Activated CD8-positive, alpha-beta T cell treated with anti-CD3 and anti-CD28 coated beads for 36 hours (primary cell): ENCODE measurements at regions of chr4 and their contacts with region 1.

Region 1: DNA sequence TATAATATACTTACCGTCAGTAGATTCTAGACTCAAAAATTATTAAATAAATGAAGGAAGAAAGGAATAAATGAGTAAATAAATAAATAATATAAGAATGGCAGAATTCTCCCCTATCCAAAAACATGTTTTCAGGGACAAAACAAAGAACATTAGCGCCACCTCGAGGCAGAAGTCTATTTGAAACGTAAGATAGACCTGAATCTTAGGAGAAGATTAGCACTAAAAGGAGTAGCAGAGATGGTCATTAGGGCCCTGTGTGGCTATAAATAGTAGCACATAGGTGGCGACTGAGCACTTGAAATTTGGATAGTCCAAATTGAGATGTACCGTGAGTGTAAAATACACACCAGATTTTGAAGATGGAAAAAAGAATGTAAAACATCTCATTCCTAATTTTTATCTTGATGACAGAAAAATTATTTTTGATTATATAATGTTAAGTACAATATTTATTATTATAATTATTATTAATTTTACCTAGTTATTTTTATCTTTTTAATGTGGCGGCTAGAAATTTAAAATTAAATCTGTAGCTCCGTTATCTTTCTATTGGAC is 24.3 kb upstream of the SRD5A3 start:
- DNase-seq: peak; percentile 88
- ATAC-seq: peak; percentile 55
- H3K4me3 Mint-ChIP-seq: no peak overlapping the region
- H3K27ac Mint-ChIP-seq: no peak overlapping the region
- H3K4me1 Mint-ChIP-seq: peaks cover 30% of the 10 kb centered on the region
- H3K27me3 Mint-ChIP-seq: peaks cover 3% of the 10 kb centered on the region
- CTCF ChIP-seq: peak; percentile 81

Region 2: GRCh38 chr4:55078987-55079386 is 242.8 kb before region 1 on chr4:
- CTCF ChIA-PET with region 1: no interaction called
- POLR2A ChIA-PET with region 1: no interaction called
- intact Hi-C with region 1: loop called (anchors 5 kb)
- DNase-seq: no peak
- ATAC-seq: no peak
- H3K4me3 Mint-ChIP-seq: no peak overlapping the region
- H3K27ac Mint-ChIP-seq: no peak overlapping the region
- H3K4me1 Mint-ChIP-seq: peaks cover 10% of the 10 kb centered on the region
- H3K27me3 Mint-ChIP-seq: peaks cover 22% of the 10 kb centered on the region
- CTCF ChIP-seq: no peak

Region 3: DNA sequence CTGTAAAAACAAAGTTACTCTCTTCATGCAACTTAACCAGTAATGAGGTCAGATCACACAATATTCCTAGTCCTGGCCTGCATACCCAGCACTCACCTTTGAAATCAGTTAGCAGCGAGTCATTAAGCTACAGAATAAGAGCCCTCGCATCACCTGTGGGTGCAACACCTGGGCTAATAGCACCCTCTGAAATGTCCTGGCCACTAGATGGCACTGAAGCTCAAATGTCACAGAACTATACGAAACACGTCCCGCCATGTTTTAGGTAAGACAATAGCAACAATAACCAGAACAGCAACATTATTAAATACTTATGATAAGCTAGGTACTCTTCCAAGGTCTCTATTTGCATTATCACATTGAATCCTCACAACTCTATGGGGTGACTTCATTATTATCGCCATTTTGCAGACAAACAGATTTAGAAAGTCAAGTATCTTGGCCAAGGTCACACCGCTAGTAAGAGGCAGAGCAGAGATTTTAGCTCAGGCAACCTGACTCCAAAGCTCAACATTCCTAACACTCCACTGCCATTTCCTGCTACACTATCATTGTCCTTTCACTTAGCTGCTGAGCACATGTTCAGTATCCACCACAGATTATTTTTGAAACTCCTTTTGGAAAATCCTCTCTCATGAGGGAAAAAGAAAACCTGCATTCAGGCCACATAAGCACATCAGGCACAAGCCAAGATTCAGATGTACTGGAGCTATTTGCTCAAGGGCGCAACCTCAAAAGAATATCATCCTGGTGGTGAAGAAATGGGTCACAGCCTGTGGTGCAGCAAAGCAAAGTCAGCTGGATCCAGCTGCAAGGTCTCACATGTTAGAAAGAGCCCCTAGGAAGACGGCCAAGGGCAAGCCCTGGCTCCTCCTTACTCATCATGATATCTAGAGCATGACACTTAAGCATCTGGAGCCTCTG is 136.9 kb before region 1 on chr4:
- CTCF ChIA-PET with region 1: interaction called, 22 read pairs
- POLR2A ChIA-PET with region 1: no interaction called
- intact Hi-C with region 1: loop called (anchors 10 kb)
- DNase-seq: peak; percentile 50
- ATAC-seq: peak; percentile 30
- H3K4me3 Mint-ChIP-seq: no peak overlapping the region
- H3K27ac Mint-ChIP-seq: no peak overlapping the region
- H3K4me1 Mint-ChIP-seq: peaks cover 6% of the 10 kb centered on the region
- H3K27me3 Mint-ChIP-seq: peaks cover 11% of the 10 kb centered on the region
- CTCF ChIP-seq: peak; percentile 36